Mammary epithelial cell (primary cell): ENCODE measurements at regions of chrX and their contacts with region 1.

Region 1: DNA sequence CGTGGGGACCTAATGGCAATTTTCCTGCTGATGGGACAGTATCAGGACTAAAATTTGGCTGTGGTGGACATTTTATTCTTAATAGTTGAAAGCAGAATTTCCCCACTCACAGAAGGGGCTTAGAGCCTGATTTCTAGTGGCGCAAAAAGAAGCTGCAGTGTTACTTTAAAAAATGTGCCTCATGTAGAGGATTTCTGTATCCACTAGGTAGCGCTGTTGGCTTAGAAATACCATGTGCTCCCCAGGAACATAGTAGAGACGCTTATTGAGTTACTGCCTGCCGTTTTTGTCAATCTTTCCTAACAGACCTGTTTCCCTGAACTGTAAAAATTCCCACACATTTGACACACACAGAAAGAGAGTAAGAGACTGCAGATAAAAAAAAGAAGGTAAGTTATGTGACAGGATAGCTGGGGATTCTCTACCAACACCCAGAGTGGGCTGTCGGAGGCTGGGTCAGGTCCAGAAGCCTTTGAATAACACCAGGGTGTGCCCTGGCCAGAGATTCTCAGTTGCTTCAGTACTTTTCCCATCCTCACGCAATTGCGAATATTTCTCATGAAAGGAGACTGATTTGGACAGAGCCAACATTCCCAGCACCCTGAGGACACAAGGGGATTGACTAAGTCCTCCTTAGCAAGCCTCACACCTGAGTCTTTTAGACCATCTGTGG is 88.4 kb downstream of the ZXDA start:
- DNase-seq: peak; percentile 35
- H3K4me3 ChIP-seq: no peak overlapping the region
- H3K27ac ChIP-seq: no peak overlapping the region
- H3K4me1 ChIP-seq: no peaks in the 10 kb centered on the region
- H3K27me3 ChIP-seq: peaks cover 2% of the 10 kb centered on the region
- CTCF ChIP-seq: peak; percentile 46 to 69

Region 2: DNA sequence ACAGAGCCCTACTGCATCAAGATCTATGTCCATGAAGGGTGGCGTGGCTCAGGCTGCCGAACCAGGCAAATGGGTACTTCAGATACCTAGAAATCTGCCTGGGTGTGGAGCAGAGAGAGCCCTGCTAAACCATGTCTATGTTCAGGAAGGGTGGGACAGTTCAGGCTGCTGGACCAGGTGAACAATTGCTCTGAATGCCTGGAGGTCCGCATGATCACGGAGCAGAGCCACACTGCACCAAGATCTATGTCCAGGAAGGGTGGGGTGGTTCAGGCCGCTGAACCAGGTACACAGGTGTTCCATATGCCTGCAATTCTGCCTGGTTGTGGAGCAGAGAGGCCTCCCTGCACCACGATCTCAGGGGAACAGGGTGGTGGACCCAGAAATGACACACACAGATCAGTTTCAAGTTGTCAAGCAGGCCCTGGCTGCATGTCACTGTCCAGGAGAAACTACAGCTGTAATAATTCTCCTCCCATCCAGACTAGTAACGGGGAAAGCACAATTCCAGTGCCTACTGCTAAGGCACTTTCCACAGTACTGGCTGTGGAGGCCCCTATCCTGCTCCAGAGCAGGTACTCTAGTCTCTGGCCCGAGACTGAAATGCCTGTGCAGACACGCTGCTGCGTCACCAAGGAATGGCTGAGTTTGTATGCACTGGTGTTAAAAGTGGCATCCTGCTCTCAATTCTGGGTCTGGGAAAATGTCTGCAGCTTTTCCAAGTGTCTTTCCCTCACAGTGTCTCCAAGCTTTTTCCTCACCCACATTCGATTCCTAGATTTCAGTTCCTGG is 1233.2 kb before region 1 on chrX:
- CTCF ChIA-PET with region 1: no interaction called
- dilution Hi-C with region 1: no loop called
- in situ Hi-C with region 1: no loop called
- intact Hi-C with region 1: no loop called
- DNase-seq: peak; percentile 27
- H3K4me3 ChIP-seq: no peak overlapping the region
- H3K27ac ChIP-seq: no peak overlapping the region
- H3K4me1 ChIP-seq: peaks cover 4% of the 10 kb centered on the region
- H3K27me3 ChIP-seq: no peaks in the 10 kb centered on the region
- CTCF ChIP-seq: no peak

Region 3: DNA sequence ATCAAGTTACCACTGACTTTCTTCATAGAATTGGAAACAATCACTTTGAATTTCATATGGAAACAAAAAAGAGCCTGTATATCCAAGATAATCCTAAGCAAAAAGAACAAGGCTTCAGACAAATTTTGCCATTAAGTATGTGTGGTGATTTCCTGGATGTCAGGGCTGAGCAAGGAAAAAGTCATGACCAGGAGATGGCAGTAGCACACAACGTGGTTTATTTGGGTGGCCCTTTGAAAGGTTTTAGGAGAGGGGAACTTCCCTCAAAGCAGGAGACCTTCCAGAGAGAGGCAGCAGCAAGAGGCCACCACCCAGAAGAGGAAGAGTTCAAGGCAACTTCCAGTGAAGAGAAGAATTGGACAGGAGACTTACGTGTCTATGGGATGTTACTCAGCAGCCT is 248.1 kb before region 1 on chrX:
- CTCF ChIA-PET with region 1: no interaction called
- dilution Hi-C with region 1: no loop called
- in situ Hi-C with region 1: loop called in 1 of 2 experiments (anchors 25 kb)
- intact Hi-C with region 1: loop called (anchors 5 kb)
- DNase-seq: no peak
- H3K4me3 ChIP-seq: no peak overlapping the region
- H3K27ac ChIP-seq: no peak overlapping the region
- H3K4me1 ChIP-seq: no peaks in the 10 kb centered on the region
- H3K27me3 ChIP-seq: no peaks in the 10 kb centered on the region
- CTCF ChIP-seq: peak; percentile 45 to 58

Region 4: GRCh38 chrX:57595381-57595811 is 226.4 kb before region 1 on chrX:
- CTCF ChIA-PET with region 1: no interaction called
- dilution Hi-C with region 1: no loop called
- in situ Hi-C with region 1: loop called in 1 of 2 experiments (anchors 25 kb)
- intact Hi-C with region 1: no loop called
- DNase-seq: peak; percentile 77
- H3K4me3 ChIP-seq: peak overlapping the region in 2 of 3 experiments; percentile 30 to 38
- H3K27ac ChIP-seq: peak overlapping the region; percentile 76
- H3K4me1 ChIP-seq: peaks cover 15% of the 10 kb centered on the region
- H3K27me3 ChIP-seq: no peaks in the 10 kb centered on the region
- CTCF ChIP-seq: no peak

Region 5: DNA sequence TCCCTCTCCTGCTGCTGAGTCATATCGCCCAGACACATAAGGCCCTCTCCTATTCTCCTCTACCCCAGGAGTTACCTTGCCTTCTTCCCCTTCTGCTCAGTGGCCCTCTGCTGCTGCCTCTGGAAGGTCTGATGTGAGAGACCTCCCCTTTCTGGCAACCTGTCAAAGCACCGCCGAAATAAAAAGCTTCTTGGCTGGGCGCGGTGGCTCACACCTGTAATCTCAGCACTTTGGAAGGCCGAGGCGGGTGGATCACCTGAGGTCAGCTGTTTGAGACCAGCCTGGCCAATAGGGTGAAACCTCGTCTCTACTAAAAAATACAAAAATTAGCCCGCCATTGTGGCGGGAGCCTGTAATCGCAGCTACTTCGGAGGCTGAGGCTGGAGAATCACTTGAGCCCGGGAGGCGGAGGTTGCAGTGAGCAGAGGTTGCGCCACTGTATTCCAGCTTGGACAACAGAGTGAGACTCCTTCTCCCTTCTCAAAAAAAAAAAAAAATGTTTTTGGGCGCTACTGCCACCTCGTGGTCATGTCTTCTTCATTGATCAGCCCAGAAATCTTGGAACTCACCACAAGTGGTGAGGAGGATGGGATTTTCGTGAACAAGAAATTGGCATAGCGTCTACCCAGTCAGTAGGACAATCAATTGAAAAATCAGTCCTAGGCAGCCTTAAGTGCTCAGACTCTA is 97.1 kb after region 1 on chrX:
- CTCF ChIA-PET with region 1: no interaction called
- dilution Hi-C with region 1: no loop called
- in situ Hi-C with region 1: loop called in 1 of 2 experiments (anchors 10 kb)
- intact Hi-C with region 1: loop called (anchors 1 kb)
- DNase-seq: no peak
- H3K4me3 ChIP-seq: no peak overlapping the region
- H3K27ac ChIP-seq: no peak overlapping the region
- H3K4me1 ChIP-seq: no peaks in the 10 kb centered on the region
- H3K27me3 ChIP-seq: peaks cover 2% of the 10 kb centered on the region
- CTCF ChIP-seq: peak; percentile 37 to 51

Region 6: DNA sequence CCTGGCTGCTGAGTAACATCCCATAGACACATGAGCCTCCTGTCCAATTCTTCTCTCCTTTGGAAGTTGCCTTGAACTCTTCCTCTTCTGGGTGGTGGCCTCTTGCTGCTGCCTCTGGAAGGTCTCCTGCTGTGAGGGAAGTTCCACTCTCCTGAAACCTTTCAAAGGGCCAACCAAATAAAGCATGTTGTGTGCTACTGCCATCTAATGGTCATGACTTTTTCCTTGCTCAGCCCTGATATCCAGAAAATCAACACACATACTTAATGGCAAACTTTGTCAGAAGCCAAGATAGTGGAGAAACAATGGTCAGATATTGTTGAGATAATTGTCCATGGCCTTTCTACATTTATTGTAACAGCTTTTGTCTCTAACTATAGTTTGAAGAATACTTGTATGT is 107.5 kb after region 1 on chrX:
- CTCF ChIA-PET with region 1: no interaction called
- dilution Hi-C with region 1: no loop called
- in situ Hi-C with region 1: loop called in 1 of 2 experiments (anchors 10 kb)
- intact Hi-C with region 1: loop called (anchors 1 kb)
- DNase-seq: peak; percentile 26
- H3K4me3 ChIP-seq: no peak overlapping the region
- H3K27ac ChIP-seq: no peak overlapping the region
- H3K4me1 ChIP-seq: no peaks in the 10 kb centered on the region
- H3K27me3 ChIP-seq: no peaks in the 10 kb centered on the region
- CTCF ChIP-seq: peak; percentile 51 to 63

Region 7: GRCh38 chrX:58025979-58026378 is 204.1 kb after region 1 on chrX:
- CTCF ChIA-PET with region 1: interaction called, 3 read pairs
- dilution Hi-C with region 1: no loop called
- in situ Hi-C with region 1: loop called in 1 of 2 experiments (anchors 25 kb)
- intact Hi-C with region 1: loop called (anchors 1 kb)
- DNase-seq: peak; percentile 9
- H3K4me3 ChIP-seq: no peak overlapping the region
- H3K27ac ChIP-seq: no peak overlapping the region
- H3K4me1 ChIP-seq: no peaks in the 10 kb centered on the region
- H3K27me3 ChIP-seq: no peaks in the 10 kb centered on the region
- CTCF ChIP-seq: peak; percentile 53 to 76